Mammary epithelial cell (primary cell): ENCODE measurements at regions of chr22 and their contacts with region 1.

Region 1: DNA sequence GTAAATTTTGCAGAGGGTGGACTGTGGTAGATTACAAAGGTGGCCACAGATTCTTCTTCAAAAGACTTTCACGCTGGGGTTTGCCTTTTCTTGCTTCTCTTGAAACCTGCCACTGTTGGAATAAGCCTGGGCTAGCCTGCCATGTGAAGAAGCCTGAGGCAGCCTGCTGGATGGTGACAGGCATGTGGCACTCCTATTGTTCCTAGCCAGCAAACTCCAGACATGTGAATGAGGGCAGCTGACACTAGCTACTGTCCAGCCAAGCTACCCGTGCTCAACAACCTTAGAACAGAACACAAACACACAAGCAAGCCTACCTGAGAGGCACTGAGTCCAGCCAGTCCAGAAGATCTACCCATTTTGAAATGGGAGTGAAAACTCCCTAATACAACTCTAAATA is 322.7 kb upstream of the LARGE1 start:
- DNase-seq: no peak
- H3K4me3 ChIP-seq: no peak overlapping the region
- H3K27ac ChIP-seq: no peak overlapping the region
- H3K4me1 ChIP-seq: no peaks in the 10 kb centered on the region
- H3K27me3 ChIP-seq: no peaks in the 10 kb centered on the region
- CTCF ChIP-seq: no peak

Region 2: DNA sequence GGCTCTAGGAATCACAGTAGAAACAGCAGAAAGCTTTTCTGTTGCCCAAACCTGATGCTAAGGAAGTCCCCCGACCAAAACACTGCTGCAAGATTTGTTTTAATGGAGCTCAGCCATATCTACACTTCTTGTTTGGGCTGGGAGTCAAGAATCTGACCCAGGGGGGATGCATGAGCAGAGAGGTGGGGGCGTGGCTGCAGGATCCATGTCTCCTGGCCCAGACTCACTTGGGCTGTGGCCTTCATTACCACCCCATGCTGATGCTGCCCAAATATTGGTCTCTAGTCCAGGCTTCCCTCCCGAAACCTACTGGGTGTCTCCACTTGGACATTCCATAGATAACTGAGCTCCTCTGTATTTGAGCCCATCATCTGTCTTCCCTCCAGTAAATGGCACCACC is 38.7 kb after region 1 on chr22:
- CTCF ChIA-PET with region 1: no interaction called
- dilution Hi-C with region 1: loop called (anchors 5 kb)
- in situ Hi-C with region 1: no loop called
- intact Hi-C with region 1: no loop called
- DNase-seq: no peak
- H3K4me3 ChIP-seq: no peak overlapping the region
- H3K27ac ChIP-seq: no peak overlapping the region
- H3K4me1 ChIP-seq: no peaks in the 10 kb centered on the region
- H3K27me3 ChIP-seq: no peaks in the 10 kb centered on the region
- CTCF ChIP-seq: no peak